Kidney (tissue), 22 donors: ENCODE measurements at regions of chr5 and their contacts with region 1.

Region 1: GRCh38 chr5:76775921-76776320 is 42.9 kb upstream of the F2RL1 start:
- DNase-seq: no peak
- H3K4me3 ChIP-seq: no peak overlapping the region
- H3K27ac ChIP-seq: no peak overlapping the region
- H3K4me1 ChIP-seq: no peaks in the 10 kb centered on the region
- H3K27me3 ChIP-seq: no peaks in the 10 kb centered on the region
- CTCF ChIP-seq: no peak

Region 2: GRCh38 chr5:76608833-76609232 is 167.1 kb before region 1 on chr5:
- intact Hi-C with region 1: loop called (anchors 5 kb)
- DNase-seq: peak in 2 of 5 donors; percentile 26 to 76
- H3K4me3 ChIP-seq: no peak overlapping the region
- H3K27ac ChIP-seq: no peak overlapping the region
- H3K4me1 ChIP-seq: no peaks in the 10 kb centered on the region
- H3K27me3 ChIP-seq: no peaks in the 10 kb centered on the region
- CTCF ChIP-seq: no peak

Region 3: GRCh38 chr5:76715736-76716455 is 60.0 kb before region 1 on chr5 and contains the start of gene F2R:
- intact Hi-C with region 1: no loop called
- DNase-seq: peak; percentile 82 to 92 (median 86)
- H3K4me3 ChIP-seq: peak within 1 kb of the TSS; percentile 65 to 78 (median 77)
- H3K27ac ChIP-seq: peak within 1 kb of the TSS; percentile 63 to 65
- H3K4me1 ChIP-seq: peaks cover 0 to 2% (median 0%) of the 10 kb centered on the region in 3 donors
- H3K27me3 ChIP-seq: peaks cover 2% of the 10 kb centered on the region
- CTCF ChIP-seq: peak; percentile 31
- total RNA-seq, gene F2R: 15.3 TPM